Left ventricle myocardium inferior (tissue), 1 donor: ENCODE measurements at regions of chr7 and their contacts with region 1.

Region 1: DNA sequence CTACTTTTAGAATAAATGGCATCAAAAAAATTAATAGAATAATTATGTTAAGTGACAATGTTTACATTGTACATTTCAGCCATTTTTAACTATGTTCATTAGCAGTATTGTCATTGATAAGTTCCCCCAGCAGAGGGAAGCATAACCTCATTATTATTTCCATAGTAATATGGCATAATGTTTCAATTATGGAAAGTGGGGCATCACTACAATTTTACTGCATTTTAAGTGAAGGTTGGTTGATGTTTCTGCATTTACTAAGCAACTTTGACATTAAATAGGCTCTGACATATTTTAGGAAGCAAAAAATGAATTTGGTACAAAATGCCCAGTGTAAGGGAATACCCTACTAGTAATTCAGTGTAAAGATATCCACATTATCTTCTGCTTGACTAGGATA is 218.3 kb downstream of the SEMA3A start:
- DNase-seq: no peak
- H3K4me3 ChIP-seq: no peak overlapping the region
- H3K27ac ChIP-seq: no peak overlapping the region
- H3K4me1 ChIP-seq: no peaks in the 10 kb centered on the region
- H3K27me3 ChIP-seq: no peaks in the 10 kb centered on the region
- CTCF ChIP-seq: peak; percentile 79

Region 2: GRCh38 chr7:84194543-84195271 is 218.4 kb after region 1 on chr7 and contains the start of gene SEMA3A:
- intact Hi-C with region 1: loop called (anchors 5 kb)
- DNase-seq: no peak
- H3K4me3 ChIP-seq: peak within 1 kb of the TSS; percentile 64
- H3K27ac ChIP-seq: no peak within 1 kb of the TSS
- H3K4me1 ChIP-seq: peaks cover 22% of the 10 kb centered on the region
- H3K27me3 ChIP-seq: no peaks in the 10 kb centered on the region
- CTCF ChIP-seq: no peak
- total RNA-seq, gene SEMA3A: 1.9 TPM

Region 3: DNA sequence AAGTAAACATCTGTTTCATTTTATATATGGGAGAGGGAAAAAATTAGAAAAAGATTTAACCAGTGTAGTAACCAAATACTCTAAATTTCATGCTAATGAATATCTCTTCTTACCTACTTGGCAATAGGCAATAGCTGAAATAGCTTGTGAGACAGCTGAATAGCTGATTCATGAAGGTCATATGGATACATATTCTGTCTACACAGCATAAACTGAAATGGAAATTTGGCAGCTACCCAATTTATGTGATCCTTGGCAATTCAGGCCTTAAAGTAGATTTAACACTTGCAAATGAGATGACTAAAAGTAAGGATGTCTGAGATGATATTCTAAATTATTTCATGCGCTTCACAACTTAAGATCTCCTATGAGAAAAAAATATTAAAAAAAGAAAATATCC is 479.5 kb after region 1 on chr7:
- intact Hi-C with region 1: loop called (anchors 10 kb)
- DNase-seq: no peak
- H3K4me3 ChIP-seq: no peak overlapping the region
- H3K27ac ChIP-seq: no peak overlapping the region
- H3K4me1 ChIP-seq: no peaks in the 10 kb centered on the region
- H3K27me3 ChIP-seq: no peaks in the 10 kb centered on the region
- CTCF ChIP-seq: no peak

Region 4: DNA sequence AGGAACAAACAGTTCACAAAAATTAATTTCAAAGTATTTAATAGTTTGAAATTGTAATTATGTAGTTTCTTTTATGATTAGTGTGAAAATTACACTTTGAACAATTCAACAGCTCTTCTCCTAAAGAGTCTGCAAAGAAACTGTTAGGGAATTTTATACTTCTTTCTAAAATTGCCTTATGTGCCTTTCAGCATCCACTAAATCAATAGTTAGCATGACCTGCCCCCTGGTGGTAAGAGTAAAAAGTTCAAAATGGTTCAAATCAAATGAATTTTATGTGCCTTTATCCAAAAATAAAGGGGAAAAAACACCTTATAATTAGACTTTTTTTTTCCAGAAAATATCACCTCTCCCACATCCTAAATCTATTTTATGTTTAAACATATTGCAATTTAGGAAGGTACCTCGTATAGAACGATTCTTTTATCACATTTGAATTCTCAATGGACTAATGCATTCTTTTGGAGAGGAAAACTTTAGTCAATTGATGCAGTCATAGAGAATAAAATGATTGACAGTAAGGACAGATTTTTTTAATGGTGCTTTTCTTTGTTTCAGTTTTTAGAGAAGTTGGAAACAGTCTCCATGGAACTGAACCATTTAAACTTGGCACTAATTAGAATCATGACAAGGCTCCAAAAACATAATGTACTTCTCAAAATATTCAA is 1046.9 kb after region 1 on chr7:
- intact Hi-C with region 1: loop called (anchors 2 kb)
- DNase-seq: no peak
- H3K4me3 ChIP-seq: no peak overlapping the region
- H3K27ac ChIP-seq: no peak overlapping the region
- H3K4me1 ChIP-seq: peaks cover 7% of the 10 kb centered on the region
- H3K27me3 ChIP-seq: no peaks in the 10 kb centered on the region
- CTCF ChIP-seq: peak; percentile 70